AG04450 (cell line): ENCODE measurements at regions of chr3 and their contacts with region 1.

Region 1: GRCh38 chr3:47824541-47825473 is 21.9 kb downstream of the DHX30 start:
- DNase-seq: peak; percentile 57
- H3K4me3 ChIP-seq: peak overlapping the region; percentile 89
- H3K27ac ChIP-seq: peak overlapping the region; percentile 52
- H3K27me3 ChIP-seq: no peaks in the 10 kb centered on the region
- CTCF ChIP-seq: peak; percentile 61

Region 2: DNA sequence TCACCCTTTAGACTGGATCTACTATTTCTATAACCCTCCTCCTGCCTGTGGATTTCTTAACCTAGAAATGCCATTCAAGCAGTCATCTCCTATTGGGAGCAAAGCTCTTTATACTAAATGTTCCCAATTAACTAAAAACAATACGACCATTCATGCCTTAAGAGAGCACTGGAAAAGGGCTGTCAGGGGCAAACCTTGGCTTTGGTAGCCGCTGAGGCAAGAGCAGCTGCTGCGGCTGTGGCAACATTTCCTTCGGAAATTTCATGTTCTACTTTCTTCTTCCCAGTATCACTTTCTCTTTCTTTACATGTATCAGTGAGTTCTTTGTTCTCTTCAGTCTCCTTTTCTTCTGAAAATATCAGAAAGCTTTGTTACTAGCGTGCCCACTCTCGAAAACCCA is 189.8 kb before region 1 on chr3:
- CTCF ChIA-PET with region 1: no interaction called
- POLR2A ChIA-PET with region 1: no interaction called
- DNase-seq: no peak
- H3K4me3 ChIP-seq: no peak overlapping the region
- H3K27ac ChIP-seq: no peak overlapping the region
- H3K27me3 ChIP-seq: no peaks in the 10 kb centered on the region
- CTCF ChIP-seq: no peak

Region 3: GRCh38 chr3:47802734-47803477 is 21.9 kb before region 1 on chr3 and contains the start of gene DHX30:
- CTCF ChIA-PET with region 1: interaction called, 12 read pairs
- POLR2A ChIA-PET with region 1: no interaction called
- DNase-seq: no peak
- H3K4me3 ChIP-seq: peak within 1 kb of the TSS; percentile 87
- H3K27ac ChIP-seq: peak within 1 kb of the TSS; percentile 96
- H3K27me3 ChIP-seq: no peaks in the 10 kb centered on the region
- CTCF ChIP-seq: no peak
- polyA plus RNA-seq, gene DHX30: 30.7 and 36.1 TPM in 2 replicates

Region 4: GRCh38 chr3:47836986-47837385 is 12.2 kb after region 1 on chr3:
- CTCF ChIA-PET with region 1: interaction called, 33 read pairs
- POLR2A ChIA-PET with region 1: interaction called, 11 read pairs
- DNase-seq: no peak
- H3K4me3 ChIP-seq: no peak overlapping the region
- H3K27ac ChIP-seq: no peak overlapping the region
- H3K27me3 ChIP-seq: no peaks in the 10 kb centered on the region
- CTCF ChIP-seq: no peak

Region 5: GRCh38 chr3:47989981-47990440 is 165.2 kb after region 1 on chr3:
- CTCF ChIA-PET with region 1: interaction called, 11 read pairs
- POLR2A ChIA-PET with region 1: interaction called, 4 read pairs
- DNase-seq: peak; percentile 88
- H3K4me3 ChIP-seq: no peak overlapping the region
- H3K27ac ChIP-seq: no peak overlapping the region
- H3K27me3 ChIP-seq: no peaks in the 10 kb centered on the region
- CTCF ChIP-seq: peak; percentile 89

Region 6: DNA sequence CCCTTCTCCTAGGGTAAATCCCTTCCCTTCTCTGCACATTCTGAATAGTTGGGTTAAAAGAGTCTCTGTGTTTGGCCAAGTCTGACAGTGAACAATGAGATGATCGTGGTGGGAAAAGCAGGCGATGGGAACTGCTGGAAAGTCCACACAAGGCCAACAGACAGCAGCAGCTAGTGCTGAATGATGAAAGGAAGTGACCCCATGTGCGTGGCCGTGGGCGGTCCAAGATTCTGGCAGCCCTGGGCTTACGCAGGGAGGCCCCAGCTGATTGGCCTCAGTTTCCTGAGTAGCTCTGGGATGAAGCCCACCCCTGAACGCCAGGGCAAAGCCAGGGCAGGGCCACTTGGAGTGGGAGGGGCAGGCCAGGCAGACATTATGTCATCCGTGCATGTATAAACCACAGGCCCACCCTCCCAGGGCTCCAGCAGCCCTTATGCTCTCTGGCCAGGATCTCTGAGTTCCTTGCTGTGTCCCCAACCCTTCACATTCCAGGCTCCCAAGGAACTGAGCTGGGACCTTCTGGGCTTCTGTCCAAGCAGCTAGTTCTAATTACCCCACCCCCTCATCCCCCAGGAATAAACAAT is 305.6 kb after region 1 on chr3:
- CTCF ChIA-PET with region 1: no interaction called
- POLR2A ChIA-PET with region 1: no interaction called
- DNase-seq: peak; percentile 72
- H3K4me3 ChIP-seq: no peak overlapping the region
- H3K27ac ChIP-seq: peak overlapping the region; percentile 84
- H3K27me3 ChIP-seq: no peaks in the 10 kb centered on the region
- CTCF ChIP-seq: no peak

Region 7: GRCh38 chr3:48157950-48158376 is 333.2 kb after region 1 on chr3:
- CTCF ChIA-PET with region 1: interaction called, 16 read pairs
- POLR2A ChIA-PET with region 1: interaction called, 3 read pairs
- DNase-seq: peak; percentile 33
- H3K4me3 ChIP-seq: no peak overlapping the region
- H3K27ac ChIP-seq: no peak overlapping the region
- H3K27me3 ChIP-seq: no peaks in the 10 kb centered on the region
- CTCF ChIP-seq: peak; percentile 83